AG04450 (cell line): ENCODE measurements at regions of chr14 and their contacts with region 1.

Region 1: GRCh38 chr14:76918751-76919543 is 92.7 kb downstream of the LRRC74A start:
- DNase-seq: peak; percentile 96
- H3K4me3 ChIP-seq: peak overlapping the region; percentile 23
- H3K27ac ChIP-seq: peak overlapping the region; percentile 98
- H3K27me3 ChIP-seq: no peaks in the 10 kb centered on the region
- CTCF ChIP-seq: no peak; the same call in 1 of the 2 replicates

Region 2: GRCh38 chr14:76271041-76271755 is 647.7 kb before region 1 on chr14:
- CTCF ChIA-PET with region 1: no interaction called
- POLR2A ChIA-PET with region 1: no interaction called
- DNase-seq: no peak
- H3K4me3 ChIP-seq: no peak overlapping the region
- H3K27ac ChIP-seq: no peak overlapping the region
- H3K27me3 ChIP-seq: peaks cover 2% of the 10 kb centered on the region
- CTCF ChIP-seq: no peak

Region 3: GRCh38 chr14:76876076-76876475 is 42.9 kb before region 1 on chr14:
- CTCF ChIA-PET with region 1: interaction called, 85 read pairs
- POLR2A ChIA-PET with region 1: no interaction called
- DNase-seq: peak; percentile 68
- H3K4me3 ChIP-seq: no peak overlapping the region
- H3K27ac ChIP-seq: no peak overlapping the region
- H3K27me3 ChIP-seq: peaks cover 2% of the 10 kb centered on the region
- CTCF ChIP-seq: peak; percentile 99

Region 4: GRCh38 chr14:76937181-76938091 is 18.5 kb after region 1 on chr14:
- CTCF ChIA-PET with region 1: interaction called, 25 read pairs
- POLR2A ChIA-PET with region 1: interaction called, 28 read pairs
- DNase-seq: peak; percentile 75
- H3K4me3 ChIP-seq: 0 out of 2 replicates have a peak overlapping the region, but pooled peaks have one; percentile 10
- H3K27ac ChIP-seq: peak overlapping the region; percentile 77
- H3K27me3 ChIP-seq: no peaks in the 10 kb centered on the region
- CTCF ChIP-seq: no peak

Region 5: DNA sequence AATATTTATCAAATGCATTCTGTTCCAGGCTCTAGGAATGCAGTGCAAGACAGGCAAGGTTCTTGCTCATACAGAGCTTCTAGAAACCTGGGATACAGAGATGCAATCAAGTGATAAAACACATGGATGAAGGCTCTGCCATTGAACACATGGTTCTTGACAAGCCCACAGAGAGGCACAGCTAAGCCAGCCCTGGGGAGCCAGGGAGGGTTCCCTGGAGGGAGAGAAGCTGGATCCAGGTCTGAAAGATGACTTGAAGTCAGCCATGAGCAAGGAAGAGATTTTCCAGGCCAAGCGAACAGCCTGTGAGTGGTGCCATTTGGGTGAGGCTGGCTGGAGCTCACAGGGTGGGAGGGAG is 43.3 kb after region 1 on chr14:
- CTCF ChIA-PET with region 1: interaction called, 16 read pairs
- POLR2A ChIA-PET with region 1: interaction called, 18 read pairs
- DNase-seq: no peak
- H3K4me3 ChIP-seq: peak overlapping the region; percentile 50
- H3K27ac ChIP-seq: peak overlapping the region; percentile 97
- H3K27me3 ChIP-seq: no peaks in the 10 kb centered on the region
- CTCF ChIP-seq: no peak

Region 6: GRCh38 chr14:76997256-76997970 is 78.5 kb after region 1 on chr14:
- CTCF ChIA-PET with region 1: no interaction called
- POLR2A ChIA-PET with region 1: no interaction called
- DNase-seq: no peak
- H3K4me3 ChIP-seq: no peak overlapping the region
- H3K27ac ChIP-seq: no peak overlapping the region
- H3K27me3 ChIP-seq: no peaks in the 10 kb centered on the region
- CTCF ChIP-seq: no peak

Region 7: DNA sequence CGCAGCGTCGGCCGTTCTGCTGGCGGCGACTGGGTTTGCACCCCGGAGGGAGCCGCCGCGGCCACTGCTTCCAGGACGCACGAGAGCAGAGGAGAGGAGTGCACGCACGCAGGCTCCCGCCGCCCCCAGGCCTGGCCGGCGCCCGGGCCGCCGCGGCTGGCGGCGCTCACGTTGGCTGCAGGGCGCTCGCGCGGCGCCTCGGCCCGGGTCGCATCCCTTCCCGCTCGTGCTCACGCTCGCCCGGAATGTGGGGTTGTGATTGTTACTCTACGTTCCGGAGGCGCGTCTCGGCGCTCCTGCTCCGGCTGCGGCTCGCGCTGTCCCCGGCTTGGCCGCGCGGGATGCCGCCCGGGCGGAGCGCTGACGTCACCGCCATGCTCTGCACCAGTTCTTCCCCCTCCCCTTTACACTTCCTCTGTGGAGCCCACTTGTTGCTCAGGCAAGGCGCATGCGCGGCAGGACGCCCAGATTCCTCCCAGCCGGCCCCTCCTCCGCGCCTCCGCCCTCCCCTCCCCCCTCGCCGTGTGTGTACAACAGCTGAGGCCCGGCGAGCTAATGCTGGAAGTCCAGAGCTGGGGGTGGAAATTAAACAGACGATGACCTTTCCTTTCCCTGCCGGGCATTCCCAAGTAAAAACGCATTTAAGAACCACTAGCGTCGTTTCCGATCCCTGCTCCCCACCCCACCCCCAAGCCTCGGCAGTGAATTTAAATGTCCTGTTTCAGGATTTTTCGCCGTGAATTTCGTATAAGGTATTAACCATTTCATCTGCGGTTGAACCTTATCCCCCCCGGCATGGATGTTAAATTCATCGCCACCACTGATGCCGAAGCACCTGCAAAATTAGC is 109.7 kb after region 1 on chr14 and contains the start of gene IRF2BPL:
- CTCF ChIA-PET with region 1: interaction called, 156 read pairs
- POLR2A ChIA-PET with region 1: interaction called, 45 read pairs
- DNase-seq: peak; percentile 99
- H3K4me3 ChIP-seq: peak within 1 kb of the TSS; percentile 94
- H3K27ac ChIP-seq: peak within 1 kb of the TSS; percentile 99
- H3K27me3 ChIP-seq: no peaks in the 10 kb centered on the region
- CTCF ChIP-seq: no peak
- polyA plus RNA-seq, gene IRF2BPL: 17.1 and 21.8 TPM in 2 replicates

Region 8: DNA sequence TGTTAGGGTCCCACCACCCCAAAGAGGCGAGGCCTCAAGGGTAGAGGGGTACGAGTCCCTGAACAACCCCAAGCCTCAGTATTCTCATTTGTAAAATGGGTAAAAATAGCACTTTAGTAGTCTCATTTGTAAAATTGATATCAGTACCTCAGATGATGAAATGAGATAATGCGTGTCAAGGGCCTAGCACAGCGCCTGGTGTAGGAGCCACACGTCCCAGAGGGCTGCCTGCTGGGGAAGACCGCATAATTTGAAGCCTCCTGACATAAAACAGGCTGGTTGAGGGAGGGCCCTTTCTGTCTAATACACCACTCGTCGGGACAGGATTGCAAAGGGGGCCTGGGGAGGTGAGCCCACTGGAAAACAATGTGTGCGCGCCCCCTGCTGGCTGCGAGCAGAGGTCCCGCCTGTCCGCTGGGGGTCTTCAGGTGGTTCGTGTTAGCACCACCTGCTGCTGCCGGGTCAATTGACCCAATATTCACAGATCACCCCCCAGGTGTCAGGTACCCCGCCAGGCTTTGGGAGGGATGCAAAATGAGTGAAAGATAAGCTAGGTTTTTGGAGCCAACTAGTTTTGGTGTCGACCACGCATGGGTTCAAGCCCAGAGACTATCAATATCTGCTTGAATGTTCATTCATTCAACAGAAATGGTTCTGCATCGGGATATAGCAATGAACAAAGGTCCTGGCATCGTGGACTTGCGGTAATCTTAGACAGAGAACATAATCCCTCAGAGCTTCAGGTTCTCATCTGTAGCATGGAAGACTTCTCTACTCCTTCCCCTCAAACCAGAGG is 134.3 kb after region 1 on chr14:
- CTCF ChIA-PET with region 1: interaction called, 111 read pairs
- POLR2A ChIA-PET with region 1: interaction called, 7 read pairs
- DNase-seq: no peak
- H3K4me3 ChIP-seq: no peak overlapping the region
- H3K27ac ChIP-seq: peak overlapping the region; percentile 21
- H3K27me3 ChIP-seq: no peaks in the 10 kb centered on the region
- CTCF ChIP-seq: peak; percentile 89

Region 9: GRCh38 chr14:77076113-77076631 is 157.2 kb after region 1 on chr14:
- CTCF ChIA-PET with region 1: interaction called, 195 read pairs
- POLR2A ChIA-PET with region 1: no interaction called
- DNase-seq: no peak
- H3K4me3 ChIP-seq: no peak overlapping the region
- H3K27ac ChIP-seq: no peak overlapping the region
- H3K27me3 ChIP-seq: no peaks in the 10 kb centered on the region
- CTCF ChIP-seq: no peak

Region 10: GRCh38 chr14:77838831-77839511 is 920.0 kb after region 1 on chr14:
- CTCF ChIA-PET with region 1: no interaction called
- POLR2A ChIA-PET with region 1: no interaction called
- DNase-seq: no peak
- H3K4me3 ChIP-seq: no peak overlapping the region
- H3K27ac ChIP-seq: no peak overlapping the region
- H3K27me3 ChIP-seq: no peaks in the 10 kb centered on the region
- CTCF ChIP-seq: no peak